Activated CD8-positive, alpha-beta memory T cell treated with anti-CD3 and anti-CD28 coated beads, Interleukin-2, amount 10 ng/mL, durations not matched to agents 7 days and 5 days (primary cell): ENCODE measurements at regions of chr15 and their contacts with region 1.

Region 1: DNA sequence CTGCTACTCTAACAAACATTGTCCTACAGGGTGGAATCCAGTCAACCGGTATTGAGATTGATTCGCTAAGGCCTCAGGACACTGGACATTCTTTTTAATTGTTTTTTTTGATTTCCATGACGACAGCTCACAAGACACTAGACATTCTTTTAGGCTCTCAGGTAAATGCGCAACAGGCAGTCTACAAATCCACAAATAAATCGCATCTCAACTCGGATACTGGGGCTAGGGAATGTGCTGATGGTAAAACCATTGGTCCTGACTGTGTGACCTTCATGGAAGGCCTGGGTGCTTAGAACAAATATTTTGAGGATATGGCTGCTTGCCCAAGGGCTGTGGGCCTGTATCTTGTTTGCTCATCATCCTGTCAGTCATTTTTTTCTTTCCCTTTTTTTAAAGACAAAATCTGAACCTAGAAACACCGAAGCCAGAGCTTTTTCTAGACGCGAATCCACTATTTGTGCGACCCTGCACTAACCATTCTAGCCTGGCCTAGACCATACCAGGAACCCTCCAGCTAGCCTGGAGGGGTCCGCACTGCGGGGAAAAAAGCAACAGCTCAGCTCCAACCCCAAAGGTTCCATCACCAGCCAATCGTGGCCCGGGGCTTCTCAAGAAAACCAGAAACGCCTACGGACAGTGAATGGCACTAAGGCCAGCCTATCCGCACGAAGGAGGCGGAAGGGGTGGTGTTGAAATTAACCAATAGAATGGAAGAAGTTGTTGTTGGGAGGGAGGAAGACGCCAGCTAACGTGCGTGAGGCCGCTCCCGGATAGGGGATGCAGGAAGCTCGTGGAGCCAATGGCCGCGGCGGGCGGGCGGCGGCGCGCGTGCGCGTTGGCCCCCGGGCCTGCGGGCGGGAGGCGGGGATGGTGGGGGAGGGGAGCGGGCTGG is 18.1 kb upstream of the CHD2 start:
- DNase-seq: peak; percentile 99
- ATAC-seq: peak; percentile 95
- H3K4me3 Mint-ChIP-seq: peak overlapping the region; percentile 82
- H3K27ac Mint-ChIP-seq: peak overlapping the region; percentile 98
- H3K4me1 Mint-ChIP-seq: peaks cover 42% of the 10 kb centered on the region
- H3K27me3 Mint-ChIP-seq: no peaks in the 10 kb centered on the region

Region 2: DNA sequence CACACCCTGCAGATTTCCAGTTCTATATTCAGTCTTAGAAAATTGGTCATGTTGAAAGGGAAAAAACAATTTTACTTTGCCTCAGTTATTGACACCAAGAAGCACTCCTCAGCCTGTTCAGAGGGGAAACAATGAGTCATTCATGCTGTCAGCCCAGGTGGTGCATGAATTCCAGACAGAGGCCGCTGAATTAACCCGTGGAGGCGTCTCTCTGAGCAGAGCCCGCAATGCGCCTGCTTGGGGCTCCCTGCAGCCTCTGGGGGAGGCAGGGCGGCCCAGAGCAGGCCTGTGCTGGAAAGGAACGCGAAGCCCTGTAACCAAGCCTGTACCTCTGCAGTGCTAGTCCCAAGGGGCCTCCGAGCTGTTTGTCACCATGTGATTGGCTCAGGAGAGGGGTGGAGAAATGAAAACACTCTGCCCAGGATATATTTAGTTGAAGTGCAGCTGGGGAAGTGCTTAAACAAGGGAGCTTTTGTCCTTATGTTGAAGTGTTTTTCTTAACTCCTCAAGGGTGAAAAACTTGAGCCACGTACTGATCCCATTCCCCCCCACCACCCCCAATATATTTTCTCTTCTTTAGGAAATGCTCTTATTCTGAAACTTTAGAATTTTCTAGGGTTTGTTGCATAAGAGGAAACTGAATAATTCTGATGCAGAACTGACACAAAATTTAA is 50.3 kb before region 1 on chr15:
- CTCF ChIA-PET with region 1: interaction called, 23 read pairs
- DNase-seq: peak; percentile 96
- ATAC-seq: peak; percentile 97
- H3K4me3 Mint-ChIP-seq: peak overlapping the region; percentile 68
- H3K27ac Mint-ChIP-seq: peak overlapping the region; percentile 98
- H3K4me1 Mint-ChIP-seq: peaks cover 42% of the 10 kb centered on the region
- H3K27me3 Mint-ChIP-seq: no peaks in the 10 kb centered on the region

Region 3: DNA sequence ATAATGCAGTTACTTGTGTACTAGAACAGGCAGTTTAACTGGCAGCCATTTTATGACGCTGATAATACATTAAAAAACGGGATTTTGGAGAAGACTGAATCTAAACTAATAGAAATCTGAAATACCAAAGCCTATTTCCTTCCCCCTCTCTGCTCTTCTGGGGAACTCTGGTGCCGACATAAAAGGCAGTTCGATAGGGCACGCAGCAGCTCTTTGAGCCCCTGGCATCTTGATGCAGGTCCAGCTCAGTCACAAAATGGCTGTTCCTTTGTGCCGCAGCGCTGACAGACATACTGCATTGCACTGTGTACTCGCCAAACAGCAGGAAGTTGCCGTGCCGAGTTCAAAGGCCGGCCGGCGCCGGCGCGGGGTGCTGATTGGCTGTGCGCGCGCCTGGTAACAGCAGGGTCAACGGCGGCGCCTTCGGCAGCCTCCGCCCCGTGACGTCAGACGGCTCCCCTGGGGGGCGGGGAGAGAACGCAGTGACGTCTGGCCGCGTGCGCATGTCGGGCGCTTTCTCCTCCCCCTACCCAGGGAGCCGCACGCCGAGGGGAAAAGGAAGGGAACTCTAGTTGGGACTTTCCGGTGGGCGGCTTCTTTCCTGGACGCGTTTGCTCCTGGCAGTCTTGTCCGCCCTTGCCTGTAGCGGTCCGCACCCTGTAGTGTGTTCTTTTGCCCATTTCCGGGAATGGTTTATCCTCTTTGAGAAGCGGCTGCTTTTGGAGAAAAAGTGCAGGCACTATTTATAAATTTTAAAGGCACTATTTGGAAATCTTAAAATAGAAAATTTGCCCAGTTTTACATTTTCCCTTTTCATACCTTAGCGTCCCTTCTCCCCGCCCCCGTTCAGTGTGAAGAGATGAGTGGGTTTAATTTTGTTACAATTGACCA is 22.1 kb after region 1 on chr15:
- CTCF ChIA-PET with region 1: interaction called, 65 read pairs
- DNase-seq: peak; percentile 100
- ATAC-seq: peak; percentile 87
- H3K4me3 Mint-ChIP-seq: peak overlapping the region; percentile 79
- H3K27ac Mint-ChIP-seq: peak overlapping the region; percentile 99
- H3K4me1 Mint-ChIP-seq: peaks cover 51% of the 10 kb centered on the region
- H3K27me3 Mint-ChIP-seq: no peaks in the 10 kb centered on the region

Region 4: GRCh38 chr15:92917606-92918407 is 35.8 kb after region 1 on chr15:
- CTCF ChIA-PET with region 1: interaction called, 11 read pairs
- DNase-seq: peak; percentile 96
- ATAC-seq: peak; percentile 54
- H3K4me3 Mint-ChIP-seq: peak overlapping the region; percentile 32
- H3K27ac Mint-ChIP-seq: peak overlapping the region; percentile 86
- H3K4me1 Mint-ChIP-seq: peaks cover 83% of the 10 kb centered on the region
- H3K27me3 Mint-ChIP-seq: no peaks in the 10 kb centered on the region

Region 5: GRCh38 chr15:92954578-92954977 is 72.5 kb after region 1 on chr15:
- CTCF ChIA-PET with region 1: no interaction called
- DNase-seq: no peak
- ATAC-seq: no peak
- H3K4me3 Mint-ChIP-seq: no peak overlapping the region
- H3K27ac Mint-ChIP-seq: no peak overlapping the region
- H3K4me1 Mint-ChIP-seq: peaks cover 24% of the 10 kb centered on the region
- H3K27me3 Mint-ChIP-seq: no peaks in the 10 kb centered on the region